Activated naive CD4-positive, alpha-beta T cell treated with anti-CD3 and anti-CD28 coated beads for 36 hours (primary cell): ENCODE measurements at regions of chr1 and their contacts with region 1.

Region 1: DNA sequence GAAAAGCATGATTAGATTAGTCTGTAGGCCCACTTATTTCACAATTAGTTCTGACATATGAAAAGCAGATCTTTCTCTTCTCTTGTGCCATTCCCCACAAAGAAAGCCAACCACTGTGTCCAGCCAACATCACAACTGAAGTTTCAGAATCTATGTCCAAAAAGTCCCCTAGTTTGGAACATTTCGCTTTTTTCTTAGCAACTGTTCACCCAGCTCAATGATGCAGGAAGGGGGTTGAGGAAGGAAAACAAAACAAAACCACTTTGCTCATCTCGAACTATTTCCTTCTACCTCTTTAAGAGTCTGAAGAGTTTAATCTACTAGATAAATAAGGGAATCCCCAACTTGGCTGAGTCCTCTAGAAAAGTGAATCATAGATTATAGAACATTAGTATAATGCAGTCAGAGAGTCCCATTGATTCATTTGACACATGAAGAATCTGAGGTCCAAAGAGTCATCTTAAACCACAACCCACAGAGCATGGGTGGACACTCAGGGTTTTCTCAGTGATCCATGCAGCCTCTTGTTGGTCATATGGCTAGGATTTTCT is 159.3 kb upstream of the SGIP1 start:
- DNase-seq: peak; percentile 77
- H3K4me3 Mint-ChIP-seq: peak overlapping the region; percentile 50
- H3K27ac Mint-ChIP-seq: peak overlapping the region; percentile 94
- H3K4me1 Mint-ChIP-seq: peaks cover 76% of the 10 kb centered on the region
- H3K27me3 Mint-ChIP-seq: no peaks in the 10 kb centered on the region

Region 2: GRCh38 chr1:65812065-65812464 is 562.6 kb before region 1 on chr1:
- CTCF ChIA-PET with region 1: no interaction called
- intact Hi-C with region 1: loop called (anchors 1 kb)
- DNase-seq: peak; percentile 78
- H3K4me3 Mint-ChIP-seq: no peak overlapping the region
- H3K27ac Mint-ChIP-seq: peak overlapping the region; percentile 36
- H3K4me1 Mint-ChIP-seq: peaks cover 12% of the 10 kb centered on the region
- H3K27me3 Mint-ChIP-seq: peaks cover 31% of the 10 kb centered on the region

Region 3: DNA sequence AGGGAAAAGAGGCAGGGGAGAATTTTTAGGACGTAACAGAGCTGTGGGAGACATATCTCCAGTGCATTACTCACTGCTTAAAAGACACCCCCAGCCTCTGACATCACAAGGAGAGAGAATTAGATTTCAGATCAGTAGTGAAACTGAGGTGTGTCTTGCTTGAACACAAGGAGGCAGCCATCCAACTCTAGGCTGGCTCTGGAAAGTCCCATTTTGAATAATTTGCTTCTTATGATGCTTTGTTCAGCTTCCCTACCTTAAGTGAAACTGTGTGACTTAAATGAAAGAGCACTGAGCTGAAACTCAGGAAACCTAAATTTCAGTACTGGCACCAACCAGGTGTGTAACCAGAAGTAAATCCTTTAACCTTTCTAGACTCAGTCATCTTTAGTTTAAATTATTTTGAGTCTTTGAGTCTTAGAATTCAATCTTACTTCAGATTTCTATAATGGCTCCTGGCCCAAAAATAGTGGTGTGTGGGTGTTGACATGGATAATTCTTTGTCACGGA is 92.2 kb before region 1 on chr1:
- CTCF ChIA-PET with region 1: interaction called, 6 read pairs
- intact Hi-C with region 1: loop called (anchors 1 kb)
- DNase-seq: peak; percentile 89
- H3K4me3 Mint-ChIP-seq: peak overlapping the region; percentile 17
- H3K27ac Mint-ChIP-seq: peak overlapping the region; percentile 89
- H3K4me1 Mint-ChIP-seq: peaks cover 87% of the 10 kb centered on the region
- H3K27me3 Mint-ChIP-seq: no peaks in the 10 kb centered on the region

Region 4: GRCh38 chr1:66402194-66402593 is 27.6 kb after region 1 on chr1:
- CTCF ChIA-PET with region 1: interaction called, 4 read pairs
- intact Hi-C with region 1: loop called (anchors 1 kb)
- DNase-seq: no peak
- H3K4me3 Mint-ChIP-seq: no peak overlapping the region
- H3K27ac Mint-ChIP-seq: no peak overlapping the region
- H3K4me1 Mint-ChIP-seq: peaks cover 32% of the 10 kb centered on the region
- H3K27me3 Mint-ChIP-seq: no peaks in the 10 kb centered on the region

Region 5: GRCh38 chr1:67174716-67175284 is 800.2 kb after region 1 on chr1:
- CTCF ChIA-PET with region 1: no interaction called
- intact Hi-C with region 1: loop called (anchors 1 kb)
- DNase-seq: peak; percentile 63
- H3K4me3 Mint-ChIP-seq: peak overlapping the region; percentile 7
- H3K27ac Mint-ChIP-seq: peak overlapping the region; percentile 99
- H3K4me1 Mint-ChIP-seq: peaks cover 81% of the 10 kb centered on the region
- H3K27me3 Mint-ChIP-seq: no peaks in the 10 kb centered on the region

Region 6: DNA sequence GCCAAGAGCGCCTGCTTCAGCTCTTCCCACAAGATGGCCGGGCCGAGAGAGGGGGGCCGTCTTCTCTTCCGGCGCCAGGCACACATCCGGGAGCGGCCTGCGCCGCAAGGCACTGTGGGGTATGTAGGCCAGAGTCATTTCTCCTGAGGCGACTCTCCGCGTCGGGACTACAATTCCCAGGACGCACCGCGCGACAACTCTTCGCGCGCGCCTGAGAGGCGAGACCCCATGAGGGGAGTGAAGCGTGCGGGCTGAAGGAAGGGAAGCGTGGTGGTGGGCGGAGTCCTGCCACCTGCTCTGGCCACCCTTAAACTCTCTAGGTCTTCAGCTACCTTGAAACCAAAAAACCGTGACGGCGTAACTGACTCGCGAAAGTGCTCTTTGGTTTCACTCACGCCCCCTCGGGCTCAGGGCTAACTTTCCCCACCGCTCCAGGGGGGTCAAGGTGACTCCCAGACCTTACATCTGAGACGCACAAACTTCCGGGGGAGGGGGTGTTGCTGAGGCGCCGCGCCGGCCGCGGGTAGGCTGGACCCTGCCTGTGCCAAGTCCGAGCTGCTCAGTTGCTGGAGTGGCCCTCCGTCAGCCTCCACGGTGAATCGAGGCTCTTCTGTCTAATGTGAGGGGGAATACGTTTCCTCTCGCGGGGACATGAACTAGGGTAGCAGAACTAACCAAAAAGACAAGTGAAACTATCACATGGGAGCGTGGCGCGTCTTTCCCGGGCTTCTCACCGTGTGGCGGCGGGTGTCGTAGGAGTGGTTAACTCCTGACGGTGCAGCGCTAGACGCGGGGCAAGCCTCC is 1055.9 kb after region 1 on chr1 and contains the start of gene SERBP1:
- CTCF ChIA-PET with region 1: no interaction called
- intact Hi-C with region 1: loop called (anchors 10 kb)
- DNase-seq: peak; percentile 97
- H3K4me3 Mint-ChIP-seq: peak within 1 kb of the TSS; percentile 97
- H3K27ac Mint-ChIP-seq: peak within 1 kb of the TSS; percentile 98
- H3K4me1 Mint-ChIP-seq: peaks cover 44% of the 10 kb centered on the region
- H3K27me3 Mint-ChIP-seq: no peaks in the 10 kb centered on the region
- total RNA-seq, gene SERBP1: 527 to 537 TPM